Right cardiac atrium (tissue), 5 donors: ENCODE measurements at regions of chr2 and their contacts with region 1.

Region 1: GRCh38 chr2:174951745-174952144 is 53.4 kb downstream of the CHN1 start:
- DNase-seq: no peak
- ATAC-seq: no peak
- H3K4me3 ChIP-seq: no peak overlapping the region
- H3K27ac ChIP-seq: no peak overlapping the region
- H3K4me1 ChIP-seq: no peaks in the 10 kb centered on the region
- H3K27me3 ChIP-seq: no peaks in the 10 kb centered on the region

Region 2: GRCh38 chr2:174892546-174892945 is 59.2 kb before region 1 on chr2:
- intact Hi-C with region 1: loop called in 1 of 4 experiments (anchors 10 kb)
- DNase-seq: no peak
- ATAC-seq: no peak
- H3K4me3 ChIP-seq: no peak overlapping the region
- H3K27ac ChIP-seq: no peak overlapping the region
- H3K4me1 ChIP-seq: peaks cover 2% of the 10 kb centered on the region
- H3K27me3 ChIP-seq: no peaks in the 10 kb centered on the region